G401 (cell line): ENCODE measurements at regions of chr7 and their contacts with region 1.

Region 1: GRCh38 chr7:108492742-108493141 is 33.2 kb downstream of the PNPLA8 start:
- DNase-seq: no peak

Region 2: GRCh38 chr7:108452722-108453121 is 40.0 kb before region 1 on chr7:
- in situ Hi-C with region 1: loop called (anchors 5 kb)
- DNase-seq: peak; percentile 39